ENCODE measurements at regions of chr1 and their contacts with region 1.

Region 1: GRCh38 chr1:160675641-160676410 is 29.0 kb upstream of the SLAMF1 start:
- DNase-seq: peak; percentile 92
- H3K4me3 Mint-ChIP-seq: no peak overlapping the region
- H3K27ac Mint-ChIP-seq: no peak overlapping the region
- H3K4me1 Mint-ChIP-seq: peaks cover 41% of the 10 kb centered on the region
- H3K27me3 Mint-ChIP-seq: no peaks in the 10 kb centered on the region

Region 2: DNA sequence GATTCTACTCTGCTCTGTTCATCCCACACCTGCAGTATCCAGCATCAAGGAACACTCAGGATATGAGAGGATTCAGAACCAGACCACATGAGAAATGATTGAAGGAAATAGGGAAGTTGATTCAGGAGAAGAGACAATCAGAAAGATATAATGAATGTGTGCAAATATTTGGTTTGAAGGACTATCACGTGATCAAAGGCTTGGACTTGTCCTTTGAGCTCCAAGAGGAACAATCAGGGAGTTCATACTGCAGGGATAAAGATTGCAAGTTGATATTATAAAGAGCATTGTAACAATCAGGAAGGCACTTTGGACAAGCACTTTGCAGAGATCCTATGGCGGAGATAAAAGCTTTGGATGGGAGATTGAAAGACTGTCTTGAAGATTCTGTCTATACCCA is 630.2 kb before region 1 on chr1:
- CTCF ChIA-PET with region 1: no interaction called
- intact Hi-C with region 1: no loop called
- DNase-seq: no peak
- H3K4me3 Mint-ChIP-seq: no peak overlapping the region
- H3K27ac Mint-ChIP-seq: no peak overlapping the region
- H3K4me1 Mint-ChIP-seq: peaks cover 9% of the 10 kb centered on the region
- H3K27me3 Mint-ChIP-seq: peaks cover 4% of the 10 kb centered on the region

Region 3: DNA sequence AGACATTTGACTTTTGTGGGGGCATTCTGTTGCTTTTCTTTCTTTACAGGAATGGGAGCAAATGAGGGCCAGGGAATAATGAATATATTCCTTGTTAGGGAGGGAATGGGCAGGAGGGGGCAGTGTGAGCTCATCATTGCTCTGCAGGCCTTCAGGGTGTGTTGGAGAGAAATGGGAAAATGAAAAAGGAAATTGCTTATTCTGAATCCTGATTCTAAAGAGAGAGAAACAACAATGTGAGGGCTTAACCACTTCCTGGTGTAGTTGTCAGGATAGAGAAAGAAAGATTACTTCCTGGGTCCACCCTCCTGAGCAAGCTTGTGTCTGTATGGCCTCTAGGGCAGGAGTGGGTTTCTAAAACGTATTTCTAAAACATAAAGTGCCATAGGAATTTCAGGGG is 247.2 kb before region 1 on chr1:
- CTCF ChIA-PET with region 1: interaction called, 4 read pairs
- intact Hi-C with region 1: loop called (anchors 1 kb)
- DNase-seq: peak; percentile 66
- H3K4me3 Mint-ChIP-seq: peak overlapping the region; percentile 23
- H3K27ac Mint-ChIP-seq: peak overlapping the region; percentile 88
- H3K4me1 Mint-ChIP-seq: peaks cover 65% of the 10 kb centered on the region
- H3K27me3 Mint-ChIP-seq: no peaks in the 10 kb centered on the region

Region 4: GRCh38 chr1:160618763-160619274 is 57.0 kb before region 1 on chr1:
- CTCF ChIA-PET with region 1: interaction called, 24 read pairs
- intact Hi-C with region 1: loop called (anchors 1 kb)
- DNase-seq: peak; percentile 70
- H3K4me3 Mint-ChIP-seq: no peak overlapping the region
- H3K27ac Mint-ChIP-seq: peak overlapping the region; percentile 61
- H3K4me1 Mint-ChIP-seq: peaks cover 57% of the 10 kb centered on the region
- H3K27me3 Mint-ChIP-seq: no peaks in the 10 kb centered on the region

Region 5: GRCh38 chr1:160646711-160647328 is 29.0 kb before region 1 on chr1 and contains the start of gene SLAMF1:
- CTCF ChIA-PET with region 1: interaction called, 20 read pairs
- intact Hi-C with region 1: loop called (anchors 1 kb)
- DNase-seq: peak; percentile 84
- H3K4me3 Mint-ChIP-seq: peak within 1 kb of the TSS; percentile 99
- H3K27ac Mint-ChIP-seq: peak within 1 kb of the TSS; percentile 99
- H3K4me1 Mint-ChIP-seq: peaks cover 49% of the 10 kb centered on the region
- H3K27me3 Mint-ChIP-seq: no peaks in the 10 kb centered on the region
- total RNA-seq, gene SLAMF1: 101 to 112 TPM

Region 6: GRCh38 chr1:160711602-160712311 is 35.9 kb after region 1 on chr1 and contains the start of gene CD48:
- CTCF ChIA-PET with region 1: interaction called, 34 read pairs
- intact Hi-C with region 1: loop called (anchors 5 kb)
- DNase-seq: peak; percentile 70
- H3K4me3 Mint-ChIP-seq: no peak within 1 kb of the TSS
- H3K27ac Mint-ChIP-seq: no peak within 1 kb of the TSS
- H3K4me1 Mint-ChIP-seq: peaks cover 28% of the 10 kb centered on the region
- H3K27me3 Mint-ChIP-seq: no peaks in the 10 kb centered on the region
- total RNA-seq, gene CD48: 338 to 340 TPM

Region 7: DNA sequence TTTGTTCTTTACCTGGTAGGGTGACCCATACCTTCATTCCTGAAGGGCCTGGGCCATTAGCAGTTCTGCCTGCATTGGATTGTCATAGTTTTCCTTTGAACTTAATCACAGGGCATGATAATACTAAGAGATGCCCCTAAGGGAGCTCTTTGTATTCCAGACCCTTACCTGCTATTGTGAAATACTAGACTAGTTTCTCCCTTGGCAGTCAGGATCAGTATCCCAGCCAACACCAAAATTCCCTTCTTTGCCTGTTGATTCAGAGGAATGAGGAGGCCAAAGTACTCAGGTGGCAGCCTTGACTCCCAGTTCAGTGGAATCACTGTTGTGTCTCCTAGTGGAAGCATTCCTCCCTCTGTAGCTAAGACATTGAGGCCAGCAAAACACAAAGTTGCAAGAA is 83.9 kb after region 1 on chr1:
- CTCF ChIA-PET with region 1: no interaction called
- intact Hi-C with region 1: no loop called
- DNase-seq: no peak
- H3K4me3 Mint-ChIP-seq: no peak overlapping the region
- H3K27ac Mint-ChIP-seq: no peak overlapping the region
- H3K4me1 Mint-ChIP-seq: peaks cover 47% of the 10 kb centered on the region
- H3K27me3 Mint-ChIP-seq: no peaks in the 10 kb centered on the region

Region 8: DNA sequence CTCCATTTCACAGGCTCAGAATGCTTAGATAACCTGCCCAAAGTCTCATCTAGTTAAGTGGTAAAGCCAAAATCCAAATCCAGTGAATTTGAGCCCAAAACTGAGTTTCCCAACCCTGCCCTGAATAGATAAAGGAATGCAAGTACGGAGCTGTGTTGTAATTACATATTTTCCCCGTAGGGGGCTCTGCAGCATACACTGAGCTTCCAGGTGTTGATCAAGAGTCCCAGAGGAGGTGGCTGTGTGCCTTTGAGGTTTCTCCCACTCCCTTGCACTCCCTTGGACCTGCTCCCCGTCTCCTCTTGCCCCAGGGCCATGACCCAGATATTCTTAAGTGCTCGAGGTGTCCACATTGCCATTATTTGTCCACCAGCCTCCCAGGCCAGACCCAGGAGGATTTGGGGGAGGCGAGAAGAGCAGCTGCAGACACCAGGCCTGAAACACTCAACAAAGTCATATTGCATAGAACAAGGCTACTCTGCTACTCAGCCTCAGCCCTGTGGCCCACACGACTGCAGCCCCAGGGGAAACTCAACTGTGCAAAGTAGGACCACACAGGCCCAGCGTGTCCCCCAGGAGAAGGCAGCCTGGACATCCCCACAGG is 101.8 kb after region 1 on chr1:
- CTCF ChIA-PET with region 1: interaction called, 10 read pairs
- intact Hi-C with region 1: loop called (anchors 1 kb)
- DNase-seq: peak; percentile 75
- H3K4me3 Mint-ChIP-seq: no peak overlapping the region
- H3K27ac Mint-ChIP-seq: no peak overlapping the region
- H3K4me1 Mint-ChIP-seq: peaks cover 56% of the 10 kb centered on the region
- H3K27me3 Mint-ChIP-seq: no peaks in the 10 kb centered on the region

Measured in activated naive CD4-positive, alpha-beta T cell treated with anti-CD3 and anti-CD28 coated beads for 36 hours (primary cell).